Endothelial cell of umbilical vein (primary cell): ENCODE measurements at regions of chr13 and their contacts with region 1.

Region 1: GRCh38 chr13:101624210-101624922 is 171.9 kb downstream of the ITGBL1 start:
- DNase-seq: peak; percentile 83
- H3K4me3 ChIP-seq: peak overlapping the region in 2 of 3 experiments; percentile 23 to 62
- H3K27ac ChIP-seq: peak overlapping the region; percentile 91
- H3K4me1 ChIP-seq: peaks cover 32% of the 10 kb centered on the region
- H3K27me3 ChIP-seq: no peaks in the 10 kb centered on the region
- CTCF ChIP-seq: no peak
- POLR2A ChIP-seq: no peak

Region 2: GRCh38 chr13:101211261-101211660 is 413.1 kb before region 1 on chr13:
- CTCF ChIA-PET with region 1: no interaction called
- POLR2A ChIA-PET with region 1: no interaction called
- dilution Hi-C with region 1: no loop called
- intact Hi-C with region 1: loop called (anchors 5 kb)
- DNase-seq: peak; percentile 72
- H3K4me3 ChIP-seq: no peak overlapping the region
- H3K27ac ChIP-seq: peak overlapping the region; percentile 62
- H3K4me1 ChIP-seq: peaks cover 31% of the 10 kb centered on the region
- H3K27me3 ChIP-seq: no peaks in the 10 kb centered on the region
- CTCF ChIP-seq: no peak
- POLR2A ChIP-seq: no peak

Region 3: GRCh38 chr13:101520672-101521071 is 103.7 kb before region 1 on chr13:
- CTCF ChIA-PET with region 1: no interaction called
- POLR2A ChIA-PET with region 1: no interaction called
- dilution Hi-C with region 1: no loop called
- intact Hi-C with region 1: loop called (anchors 5 kb)
- DNase-seq: peak; percentile 48
- H3K4me3 ChIP-seq: no peak overlapping the region
- H3K27ac ChIP-seq: peak overlapping the region; percentile 21
- H3K4me1 ChIP-seq: peaks cover 23% of the 10 kb centered on the region
- H3K27me3 ChIP-seq: no peaks in the 10 kb centered on the region
- CTCF ChIP-seq: no peak
- POLR2A ChIP-seq: no peak

Region 4: GRCh38 chr13:101567841-101568240 is 56.5 kb before region 1 on chr13:
- CTCF ChIA-PET with region 1: no interaction called
- POLR2A ChIA-PET with region 1: no interaction called
- dilution Hi-C with region 1: no loop called
- intact Hi-C with region 1: no loop called
- DNase-seq: no peak
- H3K4me3 ChIP-seq: no peak overlapping the region
- H3K27ac ChIP-seq: no peak overlapping the region
- H3K4me1 ChIP-seq: no peaks in the 10 kb centered on the region
- H3K27me3 ChIP-seq: no peaks in the 10 kb centered on the region
- CTCF ChIP-seq: no peak
- POLR2A ChIP-seq: no peak

Region 5: DNA sequence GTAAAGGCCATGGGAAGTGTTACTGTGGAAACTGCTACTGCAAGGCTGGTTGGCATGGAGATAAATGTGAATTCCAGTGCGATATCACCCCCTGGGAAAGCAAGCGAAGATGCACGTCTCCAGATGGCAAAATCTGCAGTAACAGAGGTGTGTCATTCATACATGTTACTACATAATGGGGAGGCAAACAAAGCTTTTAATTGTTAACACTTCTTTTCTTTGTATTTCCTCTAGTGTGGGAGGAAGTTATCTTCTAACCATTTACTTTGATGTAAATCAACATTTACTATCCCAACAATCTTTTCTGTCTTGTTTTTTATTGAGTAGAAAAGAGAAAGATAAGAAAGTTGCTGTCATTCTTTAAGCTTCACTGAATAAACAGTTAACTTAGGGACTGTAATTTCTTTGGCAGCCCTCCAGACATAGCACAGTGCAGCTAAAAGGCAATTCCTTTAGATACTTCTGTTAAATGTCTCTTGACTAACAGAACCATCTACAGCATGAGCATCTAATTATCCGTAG is 45.0 kb before region 1 on chr13:
- CTCF ChIA-PET with region 1: no interaction called
- POLR2A ChIA-PET with region 1: no interaction called
- dilution Hi-C with region 1: no loop called
- intact Hi-C with region 1: loop called (anchors 1 kb)
- DNase-seq: peak; percentile 82
- H3K4me3 ChIP-seq: no peak overlapping the region
- H3K27ac ChIP-seq: peak overlapping the region; percentile 13
- H3K4me1 ChIP-seq: peaks cover 22% of the 10 kb centered on the region
- H3K27me3 ChIP-seq: no peaks in the 10 kb centered on the region
- CTCF ChIP-seq: no peak
- POLR2A ChIP-seq: no peak

Region 6: DNA sequence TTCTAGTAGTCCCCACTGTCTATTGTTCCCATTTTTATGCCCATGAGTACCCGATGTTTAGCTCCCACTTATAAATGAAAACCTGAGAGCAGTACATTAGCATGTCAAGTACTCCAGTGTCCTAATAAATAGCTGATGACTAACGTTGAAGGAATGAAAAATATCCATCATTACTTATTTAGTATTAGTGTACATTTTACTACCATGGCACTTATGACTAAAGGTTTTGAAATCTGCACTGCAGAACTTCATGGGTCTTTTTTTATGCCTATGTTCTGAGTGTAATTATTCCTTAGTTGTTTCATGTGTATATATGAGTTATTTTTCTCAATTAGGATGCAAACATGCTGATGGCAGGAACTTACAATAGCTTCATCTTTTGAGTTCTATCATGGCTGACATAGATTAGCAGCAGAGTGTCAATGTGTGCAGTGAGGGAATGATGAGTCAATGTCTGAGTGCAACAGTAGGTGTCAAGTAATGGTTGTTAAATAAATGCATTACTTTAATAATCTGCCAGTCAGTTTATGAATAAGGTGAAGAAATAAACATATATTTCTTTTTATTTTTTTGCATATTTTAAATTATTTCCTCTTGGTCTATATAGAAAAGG is 16.5 kb after region 1 on chr13:
- CTCF ChIA-PET with region 1: interaction called, 9 read pairs
- POLR2A ChIA-PET with region 1: interaction called, 3 read pairs
- dilution Hi-C with region 1: no loop called
- intact Hi-C with region 1: loop called (anchors 1 kb)
- DNase-seq: peak; percentile 68
- H3K4me3 ChIP-seq: no peak overlapping the region
- H3K27ac ChIP-seq: peak overlapping the region; percentile 84
- H3K4me1 ChIP-seq: peaks cover 24% of the 10 kb centered on the region
- H3K27me3 ChIP-seq: no peaks in the 10 kb centered on the region
- CTCF ChIP-seq: no peak
- POLR2A ChIP-seq: no peak

Region 7: DNA sequence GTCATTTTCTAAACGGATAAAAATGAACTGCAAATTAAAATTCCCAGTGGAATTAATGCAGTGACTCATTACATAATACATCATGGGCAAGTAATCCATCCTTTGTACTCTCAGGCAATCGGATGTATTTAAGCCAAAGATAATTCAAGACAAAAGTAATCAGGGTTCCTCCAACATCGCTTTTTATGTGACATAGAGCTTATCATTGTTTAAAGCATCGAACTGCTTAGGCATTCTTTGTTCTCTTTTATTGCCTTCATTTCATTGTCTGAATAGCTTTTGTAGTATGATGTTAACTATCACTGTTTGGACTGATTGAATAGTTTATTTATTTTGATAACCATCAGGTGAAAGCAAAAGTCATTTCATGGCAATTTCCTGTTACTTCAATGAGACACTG is 37.5 kb after region 1 on chr13:
- CTCF ChIA-PET with region 1: no interaction called
- POLR2A ChIA-PET with region 1: no interaction called
- dilution Hi-C with region 1: no loop called
- intact Hi-C with region 1: loop called (anchors 1 kb)
- DNase-seq: peak; percentile 84
- H3K4me3 ChIP-seq: no peak overlapping the region
- H3K27ac ChIP-seq: peak overlapping the region; percentile 32
- H3K4me1 ChIP-seq: peaks cover 23% of the 10 kb centered on the region
- H3K27me3 ChIP-seq: no peaks in the 10 kb centered on the region
- CTCF ChIP-seq: no peak
- POLR2A ChIP-seq: no peak

Region 8: GRCh38 chr13:101757446-101758039 is 133.2 kb after region 1 on chr13:
- CTCF ChIA-PET with region 1: no interaction called
- POLR2A ChIA-PET with region 1: no interaction called
- dilution Hi-C with region 1: no loop called
- intact Hi-C with region 1: loop called (anchors 2 kb)
- DNase-seq: peak; percentile 68
- H3K4me3 ChIP-seq: no peak overlapping the region
- H3K27ac ChIP-seq: no peak overlapping the region
- H3K4me1 ChIP-seq: no peaks in the 10 kb centered on the region
- H3K27me3 ChIP-seq: peaks cover 0 to 3% of the 10 kb centered on the region in 2 experiments
- CTCF ChIP-seq: peak; percentile 35 to 37
- POLR2A ChIP-seq: no peak